ENCODE measurements at regions of chr5 and their contacts with region 1.

Region 1: GRCh38 chr5:74127381-74128320 is 501.7 kb downstream of the ARHGEF28 start:
- DNase-seq: peak in 1 of 2 experiments; percentile 36
- H3K4me3 ChIP-seq: no peak overlapping the region
- H3K4me3 Mint-ChIP-seq: peak overlapping the region; percentile 32
- H3K27ac Mint-ChIP-seq: no peak overlapping the region
- H3K4me1 ChIP-seq: 0 out of 2 replicates have a peak, but pooled peaks cover 10% of the 10 kb centered on the region
- H3K4me1 Mint-ChIP-seq: peaks cover 8% of the 10 kb centered on the region
- H3K27me3 ChIP-seq: no peaks in the 10 kb centered on the region
- H3K27me3 Mint-ChIP-seq: peaks cover 2% of the 10 kb centered on the region
- CTCF ChIP-seq: peak; percentile 34 to 55

Region 2: DNA sequence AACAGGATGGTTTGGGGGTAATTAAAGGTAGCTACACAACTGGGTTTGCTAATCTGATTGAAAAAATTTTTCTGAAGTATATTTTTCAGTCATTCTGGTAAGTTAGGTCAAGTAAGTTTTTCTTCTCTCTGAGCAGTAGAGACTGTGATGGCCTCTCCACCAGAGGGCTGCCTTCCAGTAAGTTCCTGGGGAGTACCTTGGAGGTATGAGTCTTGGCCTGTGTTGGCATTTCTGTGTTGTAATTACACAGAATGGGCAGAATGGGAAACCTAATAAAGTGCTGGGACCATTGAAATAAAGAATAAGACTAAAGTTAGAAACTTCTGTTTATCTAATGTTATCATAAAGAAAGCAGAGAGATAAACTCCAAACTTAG is 70.9 kb before region 1 on chr5:
- CTCF ChIA-PET with region 1: no interaction called
- POLR2A ChIA-PET with region 1: no interaction called
- intact Hi-C with region 1: loop called (anchors 1 kb)
- DNase-seq: peak in 1 of 2 experiments; percentile 40
- H3K4me3 ChIP-seq: no peak overlapping the region
- H3K4me3 Mint-ChIP-seq: no peak overlapping the region
- H3K27ac Mint-ChIP-seq: no peak overlapping the region
- H3K4me1 ChIP-seq: no peaks in the 10 kb centered on the region
- H3K4me1 Mint-ChIP-seq: peaks cover 6% of the 10 kb centered on the region
- H3K27me3 ChIP-seq: no peaks in the 10 kb centered on the region
- H3K27me3 Mint-ChIP-seq: no peaks in the 10 kb centered on the region
- CTCF ChIP-seq: peak; percentile 31 to 63

Region 3: DNA sequence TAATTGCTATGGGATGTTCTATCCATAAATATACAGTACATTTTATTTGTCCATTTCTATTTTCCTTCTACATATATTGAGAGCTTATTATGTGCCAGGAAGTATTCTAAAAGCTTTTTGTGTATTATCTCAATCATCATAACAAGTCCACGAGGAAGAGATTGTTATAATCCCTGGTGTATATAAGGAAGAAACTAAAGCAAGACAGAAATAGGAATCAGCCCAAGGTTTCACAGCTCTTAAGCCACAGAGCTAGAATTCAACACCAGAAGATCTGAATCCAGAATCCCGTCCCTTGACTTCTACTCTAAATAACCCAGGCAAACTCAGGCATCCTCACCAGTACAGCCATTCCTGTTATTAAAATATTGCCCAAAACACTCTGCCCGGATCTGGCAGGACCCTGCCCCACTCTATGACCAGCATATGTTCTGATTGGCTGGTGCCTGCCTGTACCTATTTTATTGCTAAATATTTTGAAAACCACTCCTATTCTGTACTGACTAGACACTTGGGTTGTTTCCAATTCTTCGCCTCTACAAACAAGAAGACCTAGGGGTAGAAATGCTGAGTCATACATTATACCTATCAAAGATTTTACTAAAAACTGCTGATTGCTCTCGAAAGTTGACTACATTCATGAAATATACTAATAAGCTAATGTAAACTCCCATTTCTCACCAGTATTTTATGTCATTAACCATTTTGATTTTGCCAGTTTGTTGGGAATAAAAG is 215.5 kb after region 1 on chr5:
- CTCF ChIA-PET with region 1: no interaction called
- POLR2A ChIA-PET with region 1: no interaction called
- intact Hi-C with region 1: no loop called
- DNase-seq: no peak
- H3K4me3 ChIP-seq: no peak overlapping the region
- H3K4me3 Mint-ChIP-seq: no peak overlapping the region
- H3K27ac Mint-ChIP-seq: no peak overlapping the region
- H3K4me1 ChIP-seq: peaks cover 16% of the 10 kb centered on the region; the same call in 1 of the 2 replicates
- H3K4me1 Mint-ChIP-seq: peaks cover 10% of the 10 kb centered on the region
- H3K27me3 ChIP-seq: no peaks in the 10 kb centered on the region
- H3K27me3 Mint-ChIP-seq: no peaks in the 10 kb centered on the region
- CTCF ChIP-seq: no peak

Measured in Caco-2 (cell line).